ENCODE measurements at regions of chr16 and their contacts with region 1.

Region 1: GRCh38 chr16:11715246-11715947 is 27.3 kb downstream of the TXNDC11 start:
- DNase-seq: no peak
- H3K27ac ChIP-seq: peak overlapping the region; percentile 42; the same call in 1 of the 2 replicates
- CTCF ChIP-seq: no peak

Region 2: DNA sequence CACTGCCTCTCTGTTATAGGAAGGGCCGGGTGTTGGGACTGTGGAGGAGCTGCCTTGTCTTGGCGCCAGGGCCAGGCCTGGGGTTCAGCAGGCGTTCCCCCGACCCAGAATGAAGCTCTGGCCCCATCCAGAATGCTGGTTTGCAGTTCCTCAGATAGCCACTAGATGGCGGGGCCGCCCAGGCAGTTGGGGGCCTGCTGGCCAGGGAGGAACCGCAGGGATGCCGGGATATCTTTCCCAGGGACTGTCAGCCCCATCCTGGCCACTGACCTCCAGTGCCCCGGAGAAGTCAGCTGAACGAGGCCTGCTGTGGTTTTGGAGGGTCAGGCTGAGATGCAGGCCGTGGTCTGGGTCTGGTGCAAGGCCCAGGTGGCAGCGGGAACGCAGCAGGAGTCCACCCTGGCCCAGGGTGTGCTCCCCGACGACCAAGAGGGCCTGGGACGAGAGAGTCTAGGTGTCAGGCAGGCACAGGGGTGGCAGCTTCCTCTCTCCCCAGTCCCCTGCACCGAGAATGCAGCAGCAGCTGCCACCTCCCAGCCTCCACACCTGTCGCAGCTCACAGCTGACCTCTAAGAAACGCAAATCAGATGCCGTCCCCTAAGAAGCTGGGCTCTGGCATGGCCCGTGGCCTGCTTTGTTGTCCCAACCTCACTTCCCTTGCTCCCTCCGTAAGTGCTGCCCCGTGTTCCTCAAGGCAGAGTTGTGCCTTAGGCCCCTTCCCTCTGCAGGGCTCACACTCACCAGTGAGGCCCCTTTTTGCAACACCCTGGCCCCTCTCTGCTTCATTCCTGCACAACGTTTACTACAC is 319.0 kb before region 1 on chr16:
- CTCF ChIA-PET with region 1: interaction called, 19 read pairs
- POLR2A ChIA-PET with region 1: no interaction called
- DNase-seq: peak; percentile 82
- H3K27ac ChIP-seq: no peak overlapping the region
- CTCF ChIP-seq: peak; percentile 97

Region 3: GRCh38 chr16:11819798-11820197 is 104.4 kb after region 1 on chr16:
- CTCF ChIA-PET with region 1: no interaction called
- POLR2A ChIA-PET with region 1: no interaction called
- DNase-seq: no peak
- H3K27ac ChIP-seq: no peak overlapping the region
- CTCF ChIP-seq: no peak

Measured in RWPE1 (cell line).